CD14-positive monocyte (primary cell): ENCODE measurements at regions of chr17 and their contacts with region 1.

Region 1: DNA sequence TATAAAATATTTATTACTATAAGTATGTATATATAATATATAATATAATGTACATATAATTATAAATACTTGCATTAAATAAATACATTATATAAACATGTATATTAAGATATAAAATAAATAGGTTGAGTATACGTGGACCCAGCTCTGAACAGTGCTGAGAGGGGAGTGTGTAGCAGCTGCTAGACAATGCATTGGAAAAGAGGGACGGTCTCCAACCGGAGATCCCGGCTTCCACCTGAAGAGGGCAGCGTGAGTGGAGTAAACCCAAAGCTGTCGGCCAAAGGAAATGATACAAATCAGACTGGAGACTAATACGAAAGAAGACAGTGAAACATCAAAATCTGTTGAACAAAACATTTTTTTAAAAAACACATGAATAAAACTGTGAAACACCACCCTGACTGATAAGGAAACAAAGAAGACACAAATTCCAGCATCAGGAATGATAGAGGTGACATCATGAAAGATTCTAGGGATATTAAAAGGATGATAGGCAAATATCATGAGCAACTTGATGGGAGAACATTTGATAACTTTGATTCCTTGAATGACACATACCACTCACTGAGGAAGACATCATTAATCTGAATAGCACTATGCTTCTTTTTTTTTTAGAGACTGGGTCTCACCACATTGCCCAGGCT is 125.4 kb upstream of the CHMP6 start:
- DNase-seq: peak; percentile 53 to 73 (median 72)
- H3K4me3 ChIP-seq: no peak overlapping the region
- H3K4me3 Mint-ChIP-seq: no peak overlapping the region
- H3K27ac ChIP-seq: no peak overlapping the region
- H3K27ac Mint-ChIP-seq: peak overlapping the region in 2 of 7 donors; percentile 2 to 89
- H3K4me1 ChIP-seq: peaks cover 26 to 27% of the 10 kb centered on the region in 2 donors
- H3K4me1 Mint-ChIP-seq: peaks cover 32% of the 10 kb centered on the region
- H3K27me3 ChIP-seq: no peaks in the 10 kb centered on the region
- H3K27me3 Mint-ChIP-seq: peaks cover 2 to 13% (median 2%) of the 10 kb centered on the region in 3 donors
- CTCF ChIP-seq: peak; percentile 81

Region 2: GRCh38 chr17:80899402-80900268 is 33.4 kb after region 1 on chr17:
- intact Hi-C with region 1: loop called in 1 of 2 experiments (anchors 2 kb)
- DNase-seq: peak; percentile 20 to 58 (median 54)
- H3K4me3 ChIP-seq: no peak overlapping the region
- H3K4me3 Mint-ChIP-seq: no peak overlapping the region
- H3K27ac ChIP-seq: no peak overlapping the region
- H3K27ac Mint-ChIP-seq: peak overlapping the region in 1 of 7 donors; percentile 37
- H3K4me1 ChIP-seq: no peaks in the 10 kb centered on the region
- H3K4me1 Mint-ChIP-seq: no peaks in the 10 kb centered on the region
- H3K27me3 ChIP-seq: no peaks in the 10 kb centered on the region
- H3K27me3 Mint-ChIP-seq: no peaks in the 10 kb centered on the region
- CTCF ChIP-seq: peak; percentile 88